CD8-positive, alpha-beta memory T cell (primary cell): ENCODE measurements at regions of chr11 and their contacts with region 1.

Region 1: GRCh38 chr11:66638177-66639065 is at the start of gene RBM4:
- DNase-seq: peak; percentile 92 to 99 (median 97)
- H3K4me3 ChIP-seq: peak within 1 kb of the TSS; percentile 92
- H3K4me3 Mint-ChIP-seq: peak within 1 kb of the TSS; percentile 93 to 100 (median 97)
- H3K27ac ChIP-seq: peak within 1 kb of the TSS; percentile 92
- H3K27ac Mint-ChIP-seq: peak within 1 kb of the TSS; percentile 93 to 99 (median 98)
- H3K4me1 ChIP-seq: peaks cover 45% of the 10 kb centered on the region
- H3K4me1 Mint-ChIP-seq: peaks cover 63 to 73% (median 70%) of the 10 kb centered on the region in 3 donors
- H3K27me3 ChIP-seq: no peaks in the 10 kb centered on the region
- H3K27me3 Mint-ChIP-seq: peaks cover 0 to 6% of the 10 kb centered on the region in 2 donors
- total RNA-seq, gene RBM4: 115 to 124 TPM

Region 2: DNA sequence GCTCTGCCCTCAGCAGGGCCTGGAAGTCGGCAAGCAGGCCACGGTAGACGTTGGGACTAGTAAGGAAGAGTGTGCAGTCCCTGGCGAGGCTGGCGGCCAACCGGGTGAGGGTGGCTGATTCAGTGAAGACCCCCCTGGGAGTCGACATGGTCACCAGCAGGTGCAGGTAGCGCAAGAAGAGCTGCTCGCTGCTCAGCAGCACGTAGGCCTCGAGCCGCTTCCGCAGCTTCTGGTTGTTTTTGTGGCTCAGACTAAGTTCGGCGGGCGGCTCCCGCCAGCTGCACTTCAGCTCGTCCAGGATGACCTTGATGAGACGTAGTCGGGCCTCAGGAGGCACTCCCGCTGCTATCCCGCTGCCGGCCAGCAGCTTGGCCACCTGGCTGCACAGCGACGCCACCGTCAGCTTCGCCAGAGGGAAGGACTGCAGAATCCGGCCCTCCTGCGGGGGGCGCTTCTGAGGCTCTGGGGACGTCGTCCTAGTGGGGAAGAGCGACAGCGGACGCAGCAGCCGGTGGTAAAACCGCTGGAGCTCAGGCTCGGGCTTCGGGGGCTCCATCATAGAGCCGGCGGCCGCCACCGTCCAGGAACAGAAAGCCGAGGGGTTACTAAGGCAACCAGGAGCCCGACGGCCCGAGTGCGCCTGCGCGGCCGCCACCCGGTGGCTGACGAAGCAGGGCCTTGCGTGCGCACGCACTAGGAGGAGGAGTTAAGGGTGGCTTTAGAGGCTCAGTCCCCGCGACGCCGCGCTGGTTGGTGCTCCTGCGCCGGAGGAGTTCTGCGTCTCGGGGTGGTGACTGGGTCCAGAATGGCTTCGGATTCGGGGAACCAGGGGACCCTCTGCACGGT is 45.7 kb before region 1 on chr11 and contains the starts of genes CCDC87 and CCS:
- CTCF ChIA-PET with region 1: interaction called, 10 read pairs
- POLR2A ChIA-PET with region 1: interaction called, 13 read pairs
- DNase-seq: peak; percentile 96 to 100 (median 99)
- H3K4me3 ChIP-seq: peak within 1 kb of the TSS; percentile 96
- H3K4me3 Mint-ChIP-seq: peak within 1 kb of the TSS; percentile 84 to 100 (median 99)
- H3K27ac ChIP-seq: peak within 1 kb of the TSS; percentile 80
- H3K27ac Mint-ChIP-seq: peak within 1 kb of the TSS; percentile 81 to 100 (median 100)
- H3K4me1 ChIP-seq: peaks cover 25% of the 10 kb centered on the region
- H3K4me1 Mint-ChIP-seq: peaks cover 31 to 38% (median 37%) of the 10 kb centered on the region in 3 donors
- H3K27me3 ChIP-seq: no peaks in the 10 kb centered on the region
- H3K27me3 Mint-ChIP-seq: peaks cover 0 to 3% of the 10 kb centered on the region in 2 donors
- total RNA-seq, gene CCDC87: 0.20 to 0.27 TPM
- total RNA-seq, gene CCS: 24.1 to 25.7 TPM

Region 3: DNA sequence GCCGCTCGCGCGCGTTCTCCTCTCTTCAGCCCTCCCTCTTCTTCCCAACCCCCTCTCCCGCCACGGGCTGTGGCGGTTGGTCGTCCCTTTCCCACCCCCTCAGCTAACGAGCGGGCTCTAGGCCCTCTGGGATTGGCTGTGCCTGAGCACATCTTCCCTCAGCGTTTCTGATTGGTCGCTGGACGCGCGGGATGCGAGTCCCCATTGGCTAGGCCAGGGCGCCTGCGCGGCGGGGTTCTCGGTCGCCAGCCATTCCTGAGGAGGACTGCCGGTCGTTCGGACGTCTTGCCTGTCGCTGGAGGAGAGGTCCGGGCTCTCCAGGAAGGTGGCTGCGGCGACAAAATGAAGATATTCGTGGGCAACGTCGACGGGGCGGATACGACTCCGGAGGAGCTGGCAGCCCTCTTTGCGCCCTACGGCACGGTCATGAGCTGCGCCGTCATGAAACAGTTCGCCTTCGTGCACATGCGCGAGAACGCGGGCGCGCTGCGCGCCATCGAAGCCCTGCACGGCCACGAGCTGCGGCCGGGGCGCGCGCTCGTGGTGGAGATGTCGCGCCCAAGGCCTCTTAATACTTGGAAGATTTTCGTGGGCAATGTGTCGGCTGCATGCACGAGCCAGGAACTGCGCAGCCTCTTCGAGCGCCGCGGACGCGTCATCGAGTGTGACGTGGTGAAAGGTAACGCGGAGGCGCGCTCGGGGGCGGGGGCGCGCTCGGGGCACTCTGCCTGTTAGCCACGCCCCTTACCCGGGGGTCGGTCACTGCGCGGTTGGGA is 21.9 kb before region 1 on chr11 and contains the start of gene RBM14:
- CTCF ChIA-PET with region 1: interaction called, 20 read pairs
- POLR2A ChIA-PET with region 1: interaction called, 153 read pairs
- DNase-seq: peak; percentile 97 to 99 (median 98)
- H3K4me3 ChIP-seq: peak within 1 kb of the TSS; percentile 99
- H3K4me3 Mint-ChIP-seq: peak within 1 kb of the TSS; percentile 97 to 99 (median 98)
- H3K27ac ChIP-seq: peak within 1 kb of the TSS; percentile 100
- H3K27ac Mint-ChIP-seq: peak within 1 kb of the TSS; percentile 97 to 100 (median 99)
- H3K4me1 ChIP-seq: peaks cover 41% of the 10 kb centered on the region
- H3K4me1 Mint-ChIP-seq: peaks cover 44 to 61% (median 47%) of the 10 kb centered on the region in 3 donors
- H3K27me3 ChIP-seq: no peaks in the 10 kb centered on the region
- H3K27me3 Mint-ChIP-seq: peaks cover 0 to 4% of the 10 kb centered on the region in 2 donors
- total RNA-seq, gene RBM14: 152 to 165 TPM

Region 4: DNA sequence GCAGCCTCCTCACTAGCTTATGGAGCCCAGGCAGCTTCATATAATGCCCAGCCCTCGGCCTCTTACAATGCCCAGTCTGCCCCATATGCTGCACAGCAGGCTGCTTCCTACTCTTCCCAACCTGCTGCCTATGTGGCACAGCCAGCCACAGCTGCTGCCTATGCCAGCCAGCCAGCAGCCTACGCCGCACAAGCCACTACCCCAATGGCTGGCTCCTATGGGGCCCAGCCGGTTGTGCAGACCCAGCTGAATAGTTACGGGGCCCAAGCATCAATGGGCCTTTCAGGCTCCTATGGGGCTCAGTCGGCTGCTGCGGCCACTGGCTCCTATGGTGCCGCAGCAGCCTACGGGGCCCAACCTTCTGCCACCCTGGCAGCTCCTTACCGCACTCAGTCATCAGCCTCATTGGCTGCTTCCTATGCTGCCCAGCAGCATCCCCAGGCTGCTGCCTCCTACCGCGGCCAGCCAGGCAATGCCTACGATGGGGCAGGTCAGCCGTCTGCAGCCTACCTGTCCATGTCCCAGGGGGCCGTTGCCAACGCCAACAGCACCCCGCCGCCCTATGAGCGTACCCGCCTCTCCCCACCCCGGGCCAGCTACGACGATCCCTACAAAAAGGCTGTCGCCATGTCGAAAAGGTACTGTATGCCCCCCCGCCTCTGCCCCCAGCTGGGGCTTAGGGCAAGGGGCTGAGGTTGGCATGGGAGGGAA is 13.2 kb before region 1 on chr11:
- CTCF ChIA-PET with region 1: interaction called, 14 read pairs
- POLR2A ChIA-PET with region 1: interaction called, 23 read pairs
- DNase-seq: peak in 1 of 5 donors; percentile 17
- H3K4me3 ChIP-seq: no peak overlapping the region
- H3K4me3 Mint-ChIP-seq: no peak overlapping the region
- H3K27ac ChIP-seq: no peak overlapping the region
- H3K27ac Mint-ChIP-seq: peak overlapping the region in 3 of 8 donors; percentile 30 to 69 (median 68)
- H3K4me1 ChIP-seq: peaks cover 81% of the 10 kb centered on the region
- H3K4me1 Mint-ChIP-seq: peaks cover 69 to 88% (median 73%) of the 10 kb centered on the region in 3 donors
- H3K27me3 ChIP-seq: no peaks in the 10 kb centered on the region
- H3K27me3 Mint-ChIP-seq: peaks cover 0 to 7% of the 10 kb centered on the region in 2 donors

Region 5: GRCh38 chr11:66653123-66653522 is 14.7 kb after region 1 on chr11:
- CTCF ChIA-PET with region 1: interaction called, 10 read pairs
- POLR2A ChIA-PET with region 1: interaction called, 30 read pairs
- DNase-seq: no peak
- H3K4me3 ChIP-seq: no peak overlapping the region
- H3K4me3 Mint-ChIP-seq: peak overlapping the region in 1 of 7 donors; percentile 77
- H3K27ac ChIP-seq: no peak overlapping the region
- H3K27ac Mint-ChIP-seq: peak overlapping the region in 2 of 8 donors; percentile 42 to 46
- H3K4me1 ChIP-seq: peaks cover 9% of the 10 kb centered on the region
- H3K4me1 Mint-ChIP-seq: peaks cover 29 to 48% (median 36%) of the 10 kb centered on the region in 3 donors
- H3K27me3 ChIP-seq: no peaks in the 10 kb centered on the region
- H3K27me3 Mint-ChIP-seq: no peaks in the 10 kb centered on the region

Region 6: DNA sequence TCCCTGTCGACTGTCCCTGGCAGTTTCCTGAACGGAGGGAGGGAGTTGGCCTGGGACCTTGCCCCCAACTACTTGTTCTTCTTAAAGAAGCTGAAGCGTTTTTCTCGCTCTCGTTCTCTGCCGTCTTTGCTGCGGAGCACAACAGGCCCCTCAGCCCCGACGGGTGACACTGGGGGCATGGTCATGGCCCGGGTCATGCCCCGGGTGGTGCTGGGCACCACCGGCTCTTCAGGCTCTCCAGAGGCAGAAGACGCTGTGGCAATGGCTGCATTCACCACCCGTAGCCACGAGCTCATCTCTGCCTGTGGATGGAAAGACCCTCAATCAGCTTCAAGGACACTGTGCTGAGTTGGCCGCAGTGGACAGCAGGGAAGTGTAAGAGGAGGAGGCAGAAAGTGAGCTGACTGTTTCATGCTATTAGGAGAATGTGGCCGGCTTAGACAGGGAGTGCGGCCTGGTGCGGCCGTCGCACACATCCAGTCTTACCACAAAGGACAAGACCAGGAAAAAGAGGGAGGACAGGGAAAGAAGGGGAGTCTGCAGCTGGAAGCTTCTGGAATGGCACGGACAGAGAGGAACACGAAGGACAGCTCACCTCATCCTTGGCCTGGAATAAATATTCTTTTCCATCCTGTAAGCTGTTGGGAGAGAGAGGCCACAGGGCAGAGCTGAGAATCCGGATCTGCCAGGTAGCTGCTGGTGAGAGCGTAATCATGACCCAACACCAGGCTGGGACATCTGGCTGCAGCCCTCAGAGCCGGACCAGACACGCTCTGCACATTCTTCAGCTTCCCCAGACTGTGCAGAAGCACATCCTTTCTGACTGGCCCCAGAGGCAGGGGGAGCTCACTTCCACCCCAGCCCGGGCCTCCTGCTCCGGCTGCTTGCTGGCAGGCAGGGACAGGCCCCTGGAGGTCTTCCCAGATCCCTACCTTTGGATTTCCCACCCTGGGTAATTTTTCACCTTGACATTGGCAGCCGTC is 47.7 kb after region 1 on chr11:
- CTCF ChIA-PET with region 1: no interaction called
- POLR2A ChIA-PET with region 1: no interaction called
- DNase-seq: no peak
- H3K4me3 ChIP-seq: no peak overlapping the region
- H3K4me3 Mint-ChIP-seq: no peak overlapping the region
- H3K27ac ChIP-seq: no peak overlapping the region
- H3K27ac Mint-ChIP-seq: no peak overlapping the region
- H3K4me1 ChIP-seq: no peaks in the 10 kb centered on the region
- H3K4me1 Mint-ChIP-seq: no peaks in the 10 kb centered on the region
- H3K27me3 ChIP-seq: no peaks in the 10 kb centered on the region
- H3K27me3 Mint-ChIP-seq: no peaks in the 10 kb centered on the region